Panc1 (cell line): ENCODE measurements at regions of chr12 and their contacts with region 1.

Region 1: GRCh38 chr12:93616584-93617101 is 44.2 kb downstream of the SOCS2 start:
- DNase-seq: no peak
- ATAC-seq: peak; percentile 51; the same call in 1 of the 2 replicates
- H3K4me3 ChIP-seq: no peak overlapping the region
- H3K27ac ChIP-seq: no peak overlapping the region
- H3K4me1 ChIP-seq: no peaks in the 10 kb centered on the region
- H3K27me3 ChIP-seq: no peaks in the 10 kb centered on the region
- CTCF ChIP-seq: no peak

Region 2: DNA sequence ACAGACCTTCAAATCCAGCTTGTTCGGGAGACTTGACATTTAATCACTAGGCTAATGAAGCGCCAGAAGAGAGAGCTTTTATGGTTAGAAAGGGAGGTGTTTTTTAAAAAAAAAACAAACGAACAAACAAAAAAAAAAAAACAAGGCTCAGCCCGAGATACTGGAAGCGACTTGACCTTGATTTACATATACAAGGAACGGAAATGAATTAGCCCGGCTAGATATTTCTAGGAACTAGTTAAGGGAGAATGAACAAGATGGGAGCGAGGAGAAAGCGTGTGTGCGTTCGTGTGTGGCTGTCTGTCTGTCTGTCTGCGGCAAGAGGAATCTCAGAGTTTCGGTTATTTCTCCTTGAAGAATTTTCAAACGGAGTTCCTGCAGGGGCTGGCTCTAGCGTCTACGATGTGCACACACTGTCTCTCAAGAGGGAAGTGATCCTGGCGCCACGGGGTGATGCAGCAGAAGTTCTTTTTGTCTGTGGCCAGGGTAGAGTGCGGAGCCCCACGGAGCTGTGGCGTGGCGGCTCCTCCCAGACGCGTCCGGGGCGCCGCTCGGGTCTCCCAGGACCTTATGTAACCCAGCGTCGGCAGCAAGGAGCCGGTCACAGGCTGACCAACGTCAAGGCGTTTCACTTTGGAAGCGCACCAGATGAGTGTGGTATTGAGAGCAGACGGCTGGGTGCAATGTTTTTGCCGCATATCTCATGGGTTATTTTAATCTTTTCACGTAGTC is 25.3 kb before region 1 on chr12:
- CTCF ChIA-PET with region 1: interaction called, 10 read pairs
- POLR2A ChIA-PET with region 1: interaction called, 3 read pairs
- in situ Hi-C with region 1: no loop called
- intact Hi-C with region 1: no loop called
- DNase-seq: no peak
- ATAC-seq: peak; percentile 94
- H3K4me3 ChIP-seq: peak overlapping the region; percentile 59 to 82
- H3K27ac ChIP-seq: peak overlapping the region; percentile 90
- H3K4me1 ChIP-seq: peaks cover 20% of the 10 kb centered on the region
- H3K27me3 ChIP-seq: no peaks in the 10 kb centered on the region
- CTCF ChIP-seq: no peak